ENCODE measurements at regions of chr1 and their contacts with region 1.

Region 1: DNA sequence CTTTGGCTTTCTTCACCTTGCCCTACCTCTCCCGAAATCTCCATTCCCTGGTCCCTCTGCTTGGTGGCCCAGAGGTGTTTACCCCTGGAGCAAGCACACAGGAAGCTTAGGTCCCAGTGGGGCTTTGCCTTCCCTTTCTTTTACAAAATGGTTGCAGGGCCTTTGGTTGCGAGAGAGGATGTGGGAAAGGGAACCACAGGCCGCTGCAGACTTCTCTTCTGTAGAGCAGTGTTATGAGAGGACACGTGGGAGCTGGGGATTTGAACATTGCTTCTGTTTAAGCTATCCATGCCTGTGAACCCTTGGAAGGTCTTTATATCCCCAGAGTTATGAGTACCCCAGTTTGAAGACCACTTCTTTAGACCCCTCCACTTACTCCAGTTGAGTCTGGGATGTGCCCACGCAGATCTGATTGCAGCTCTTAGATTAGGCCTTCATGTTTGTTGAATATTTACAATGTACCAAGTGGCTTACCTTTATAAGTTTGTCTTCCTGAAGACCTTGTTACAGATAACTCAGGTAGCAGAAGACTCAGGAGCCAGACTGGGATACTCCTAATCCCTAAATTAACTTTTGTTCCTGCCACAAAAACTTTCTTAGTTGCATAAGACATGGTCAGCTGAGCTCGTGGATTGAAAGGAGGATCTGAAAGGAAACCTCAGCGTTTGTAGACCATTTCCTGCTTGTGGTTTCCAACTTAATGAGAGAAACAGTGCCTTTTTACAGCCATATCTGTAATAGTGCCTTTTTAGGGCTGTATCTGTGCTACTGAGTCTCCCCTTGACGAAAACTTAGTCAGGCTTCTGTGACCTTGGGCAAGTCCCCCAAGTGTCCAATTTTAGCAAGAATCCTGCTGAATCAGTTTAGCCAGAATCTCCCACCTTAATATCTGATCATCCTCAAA is 21.9 kb upstream of the IVNS1ABP start:
- DNase-seq: peak; percentile 61
- H3K4me3 Mint-ChIP-seq: no peak overlapping the region
- H3K27ac Mint-ChIP-seq: peak overlapping the region; percentile 20
- H3K4me1 Mint-ChIP-seq: peaks cover 23% of the 10 kb centered on the region
- H3K27me3 Mint-ChIP-seq: no peaks in the 10 kb centered on the region

Region 2: DNA sequence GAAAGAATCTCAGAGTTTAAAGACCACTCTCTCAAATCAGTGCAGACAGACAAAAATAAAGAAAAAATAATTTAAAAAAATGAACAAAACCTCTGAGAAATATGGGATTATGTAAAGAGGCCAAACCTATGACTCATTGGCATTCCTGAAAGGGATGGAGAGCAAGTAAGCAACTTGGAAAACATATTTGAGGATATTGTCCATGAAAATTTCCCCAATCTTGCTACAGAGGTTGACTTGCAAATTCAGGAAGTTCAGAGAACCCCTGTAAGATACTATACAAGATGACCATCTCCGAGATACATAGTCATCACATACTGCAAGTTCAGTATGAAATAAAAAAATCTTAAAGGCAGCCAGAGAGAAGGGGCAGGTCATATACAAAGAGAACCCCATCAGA is 21.7 kb after region 1 on chr1:
- CTCF ChIA-PET with region 1: no interaction called
- POLR2A ChIA-PET with region 1: no interaction called
- intact Hi-C with region 1: no loop called
- DNase-seq: no peak
- H3K4me3 Mint-ChIP-seq: no peak overlapping the region
- H3K27ac Mint-ChIP-seq: no peak overlapping the region
- H3K4me1 Mint-ChIP-seq: no peaks in the 10 kb centered on the region
- H3K27me3 Mint-ChIP-seq: peaks cover 2% of the 10 kb centered on the region

Region 3: DNA sequence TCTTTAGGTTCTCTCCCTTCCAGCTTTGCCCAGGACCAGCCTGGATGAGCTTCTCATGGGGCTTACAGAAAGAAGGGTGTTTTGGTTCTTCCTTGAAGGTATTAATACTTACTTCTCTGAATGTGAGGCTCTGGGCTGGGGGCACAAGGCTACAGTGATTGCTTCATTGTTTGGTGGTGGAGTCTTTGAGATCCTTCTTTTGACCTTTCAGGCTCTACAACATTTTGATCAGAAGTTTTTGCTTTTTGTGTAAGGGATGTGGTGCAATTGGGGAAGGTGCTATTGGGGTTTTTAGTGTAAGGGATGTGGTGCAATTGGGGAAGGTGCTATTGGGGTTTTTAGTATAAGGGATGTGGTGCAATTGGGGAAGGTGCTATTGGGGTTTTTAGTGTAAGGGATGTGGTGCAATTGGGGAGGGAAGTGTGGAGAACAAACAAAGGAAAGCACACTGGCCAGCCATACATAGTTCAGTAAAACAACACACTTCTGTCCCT is 81.7 kb after region 1 on chr1:
- CTCF ChIA-PET with region 1: no interaction called
- POLR2A ChIA-PET with region 1: no interaction called
- intact Hi-C with region 1: loop called (anchors 5 kb)
- DNase-seq: no peak
- H3K4me3 Mint-ChIP-seq: no peak overlapping the region
- H3K27ac Mint-ChIP-seq: peak overlapping the region; percentile 10
- H3K4me1 Mint-ChIP-seq: peaks cover 12% of the 10 kb centered on the region
- H3K27me3 Mint-ChIP-seq: peaks cover 1% of the 10 kb centered on the region

Region 4: DNA sequence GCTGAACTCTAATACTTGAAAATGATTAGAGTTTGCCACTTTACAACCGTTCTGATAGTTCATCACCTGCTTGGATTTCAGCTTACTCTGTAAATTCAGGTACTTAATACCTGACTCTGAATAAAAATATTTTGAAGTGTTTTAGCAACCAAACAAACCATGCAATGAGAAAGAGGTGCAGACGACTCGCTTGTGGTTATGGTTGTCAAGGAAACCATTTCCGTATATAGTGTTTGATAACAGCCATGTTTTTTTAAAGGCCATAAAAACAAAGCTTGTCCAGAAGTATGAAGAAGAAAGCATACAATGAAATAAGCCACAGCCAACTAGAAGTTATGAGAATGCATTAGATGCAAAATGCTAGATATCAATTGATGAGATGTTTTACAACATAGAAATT is 228.0 kb after region 1 on chr1:
- CTCF ChIA-PET with region 1: no interaction called
- POLR2A ChIA-PET with region 1: no interaction called
- intact Hi-C with region 1: loop called (anchors 5 kb)
- DNase-seq: peak; percentile 57
- H3K4me3 Mint-ChIP-seq: no peak overlapping the region
- H3K27ac Mint-ChIP-seq: peak overlapping the region; percentile 74
- H3K4me1 Mint-ChIP-seq: peaks cover 62% of the 10 kb centered on the region
- H3K27me3 Mint-ChIP-seq: no peaks in the 10 kb centered on the region